CD4-positive, alpha-beta memory T cell (primary cell): ENCODE measurements at regions of chr1 and their contacts with region 1.

Region 1: DNA sequence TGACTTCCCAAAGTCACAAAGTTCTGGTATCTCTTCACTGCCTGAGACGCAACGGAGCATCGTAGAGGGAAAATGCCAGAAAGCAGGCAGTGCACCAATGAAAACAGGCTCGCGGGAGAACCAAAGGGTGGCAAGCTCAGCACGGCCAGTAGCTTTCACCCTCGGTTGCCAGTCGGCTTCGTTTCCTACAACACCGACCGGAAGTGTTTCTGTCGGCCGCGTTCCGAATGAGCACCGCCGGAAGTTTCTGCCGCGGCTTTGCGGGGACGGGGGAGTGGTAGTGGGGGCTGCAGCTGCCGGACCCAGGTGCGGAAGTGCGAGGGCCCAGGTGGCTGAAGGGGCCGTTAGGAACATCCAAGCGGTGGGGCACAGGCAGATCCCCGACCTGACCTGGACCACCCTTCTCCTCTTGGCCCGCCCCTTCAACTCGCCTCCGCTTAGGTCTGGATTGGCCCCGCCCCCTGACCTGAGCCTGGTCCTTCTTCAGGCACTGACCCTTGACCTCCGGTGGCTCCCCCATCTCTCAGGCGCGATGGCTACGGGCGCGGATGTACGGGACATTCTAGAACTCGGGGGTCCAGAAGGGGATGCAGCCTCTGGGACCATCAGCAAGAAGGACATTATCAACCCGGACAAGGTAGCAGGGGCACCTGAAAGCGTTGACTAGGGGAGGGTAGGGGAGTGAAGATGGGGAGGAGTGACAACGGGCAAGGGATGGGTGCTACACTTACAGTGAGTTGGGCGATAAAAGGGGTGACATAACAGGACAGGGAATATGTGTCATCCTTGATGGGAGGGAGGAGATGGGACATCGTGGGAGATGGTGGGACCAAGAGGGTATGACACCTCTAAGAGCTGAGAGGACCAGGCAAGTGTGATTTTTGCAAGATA is at the start of gene DMAP1:
- DNase-seq: peak; percentile 82 to 87 (median 85)
- H3K4me3 ChIP-seq: peak within 1 kb of the TSS; percentile 92 to 99
- H3K4me3 Mint-ChIP-seq: peak within 1 kb of the TSS; percentile 92 to 98 (median 95)
- H3K27ac ChIP-seq: peak within 1 kb of the TSS; percentile 80
- H3K27ac Mint-ChIP-seq: peak within 1 kb of the TSS; percentile 94 to 98 (median 97)
- H3K4me1 ChIP-seq: peaks cover 32% of the 10 kb centered on the region
- H3K4me1 Mint-ChIP-seq: peaks cover 31 to 46% (median 39%) of the 10 kb centered on the region in 4 donors
- H3K27me3 ChIP-seq: no peaks in the 10 kb centered on the region
- H3K27me3 Mint-ChIP-seq: peaks cover 0 to 4% of the 10 kb centered on the region in 2 donors
- total RNA-seq, gene DMAP1: 81.7 to 82.6 TPM

Region 2: GRCh38 chr1:44237721-44238457 is 24.4 kb after region 1 on chr1:
- CTCF ChIA-PET with region 1: interaction called, 22 read pairs
- POLR2A ChIA-PET with region 1: no interaction called
- intact Hi-C with region 1: no loop called
- DNase-seq: peak in 1 of 5 donors; percentile 26
- H3K4me3 ChIP-seq: no peak overlapping the region
- H3K4me3 Mint-ChIP-seq: peak overlapping the region in 1 of 8 donors; percentile 2
- H3K27ac ChIP-seq: no peak overlapping the region
- H3K27ac Mint-ChIP-seq: no peak overlapping the region
- H3K4me1 ChIP-seq: no peaks in the 10 kb centered on the region
- H3K4me1 Mint-ChIP-seq: peaks cover 0 to 8% (median 4%) of the 10 kb centered on the region in 4 donors
- H3K27me3 ChIP-seq: no peaks in the 10 kb centered on the region
- H3K27me3 Mint-ChIP-seq: no peaks in the 10 kb centered on the region

Region 3: DNA sequence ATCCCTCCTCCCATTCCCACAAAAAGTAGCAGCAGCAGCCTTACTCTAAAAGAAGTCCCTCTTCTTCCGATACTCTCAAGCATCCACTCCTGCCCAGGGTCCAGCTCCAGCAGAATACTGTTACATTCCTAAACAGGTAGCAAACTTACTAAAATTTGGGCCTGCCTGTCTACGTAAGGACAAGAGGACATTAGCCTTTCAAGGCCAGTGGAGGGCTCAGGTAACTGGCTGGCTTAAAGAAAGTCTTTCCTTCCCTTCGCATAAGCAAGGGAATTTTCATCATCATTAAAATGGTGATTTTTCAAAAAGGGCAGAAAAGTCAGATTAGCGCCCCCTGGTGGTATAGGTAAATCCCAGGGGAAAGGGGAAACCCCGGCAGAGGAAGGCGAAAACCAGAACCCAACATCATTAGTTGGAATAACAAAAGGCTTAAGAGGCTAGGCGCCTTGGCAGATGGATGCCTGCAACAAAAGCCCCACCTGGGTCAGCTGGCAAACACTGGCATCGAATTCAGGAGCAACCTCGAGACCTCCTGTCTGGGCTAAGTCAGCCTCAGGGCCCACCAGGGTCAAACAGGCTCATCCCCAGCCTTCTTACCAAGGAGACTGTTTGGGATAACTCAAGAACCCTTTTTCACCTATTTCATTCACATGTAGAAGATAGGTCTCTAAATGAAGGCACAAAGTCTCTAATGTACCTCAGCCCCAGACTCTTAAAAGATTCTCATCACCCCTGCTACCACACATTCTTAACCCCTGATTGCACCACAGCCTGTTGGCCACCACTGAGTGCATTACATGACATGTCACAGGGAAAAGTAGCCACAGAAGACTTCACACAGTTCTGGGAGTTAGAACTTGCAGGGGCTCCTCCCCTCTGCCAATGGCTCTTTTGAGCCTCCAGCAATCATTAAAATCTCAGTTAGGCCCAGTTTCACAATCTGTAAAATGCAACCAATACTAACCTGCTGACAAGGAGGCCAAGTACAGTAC is 104.9 kb after region 1 on chr1:
- CTCF ChIA-PET with region 1: interaction called, 30 read pairs
- POLR2A ChIA-PET with region 1: no interaction called
- intact Hi-C with region 1: no loop called
- DNase-seq: peak in 4 of 5 donors; percentile 35 to 46 (median 40)
- H3K4me3 ChIP-seq: no peak overlapping the region
- H3K4me3 Mint-ChIP-seq: no peak overlapping the region
- H3K27ac ChIP-seq: no peak overlapping the region
- H3K27ac Mint-ChIP-seq: peak overlapping the region in 1 of 7 donors; percentile 50
- H3K4me1 ChIP-seq: no peaks in the 10 kb centered on the region
- H3K4me1 Mint-ChIP-seq: peaks cover 0 to 7% (median 3%) of the 10 kb centered on the region in 4 donors
- H3K27me3 ChIP-seq: no peaks in the 10 kb centered on the region
- H3K27me3 Mint-ChIP-seq: no peaks in the 10 kb centered on the region

Region 4: GRCh38 chr1:44433209-44433608 is 219.7 kb after region 1 on chr1:
- CTCF ChIA-PET with region 1: no interaction called
- POLR2A ChIA-PET with region 1: no interaction called
- intact Hi-C with region 1: no loop called
- DNase-seq: no peak
- H3K4me3 ChIP-seq: no peak overlapping the region
- H3K4me3 Mint-ChIP-seq: no peak overlapping the region
- H3K27ac ChIP-seq: no peak overlapping the region
- H3K27ac Mint-ChIP-seq: no peak overlapping the region
- H3K4me1 ChIP-seq: no peaks in the 10 kb centered on the region
- H3K4me1 Mint-ChIP-seq: no peaks in the 10 kb centered on the region
- H3K27me3 ChIP-seq: peaks cover 6% of the 10 kb centered on the region
- H3K27me3 Mint-ChIP-seq: peaks cover 20 to 23% of the 10 kb centered on the region in 2 donors